GM12878 (cell line): ENCODE measurements at regions of chrX and their contacts with region 1.

Region 1: DNA sequence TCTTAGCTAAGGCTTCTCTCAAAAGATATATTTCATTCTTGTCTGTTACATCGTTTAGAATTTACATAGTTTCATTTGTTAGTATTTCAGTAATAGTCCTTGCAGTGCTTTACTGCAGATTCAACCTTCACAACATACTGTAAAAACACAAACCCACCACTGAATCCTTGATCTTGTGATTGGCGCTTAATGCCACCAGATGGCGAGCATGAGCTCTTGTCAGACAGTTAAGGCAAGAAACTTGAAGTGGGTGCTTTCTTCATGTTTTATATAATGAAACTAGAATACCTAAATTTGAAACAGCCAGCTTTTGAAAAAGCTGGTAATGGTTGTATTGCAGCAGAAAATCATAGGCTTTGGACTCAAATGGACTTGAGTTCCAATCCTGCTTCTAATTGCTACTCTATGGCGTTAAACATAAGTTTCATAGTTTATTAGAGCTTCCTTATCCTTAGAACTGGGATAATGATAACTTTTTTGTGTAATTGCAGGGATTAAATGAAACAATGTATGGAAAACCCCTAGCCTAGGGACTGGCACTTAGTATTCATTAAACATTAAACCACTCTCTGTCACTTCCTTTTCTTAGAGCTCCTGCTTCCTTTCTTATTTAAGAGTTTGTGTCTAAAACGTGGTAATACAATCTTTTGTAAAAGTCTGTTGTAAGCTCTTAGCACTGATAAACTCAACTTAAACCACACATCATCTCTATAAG is 95.1 kb downstream of the USP9X start:
- DNase-seq: peak; percentile 59
- ATAC-seq: peak; percentile 83
- H3K4me3 ChIP-seq: 0 out of 2 replicates have a peak overlapping the region, but pooled peaks have one; percentile 8
- H3K27ac ChIP-seq: peak overlapping the region; percentile 45
- H3K4me1 ChIP-seq: peaks cover 18% of the 10 kb centered on the region
- H3K27me3 ChIP-seq: no peaks in the 10 kb centered on the region
- CTCF ChIP-seq: peak; percentile 75 to 87 (median 81)
- EP300 ChIP-seq: 0 out of 4 replicates have a peak, but pooled peaks of 1 of the 2 experiments have one; percentile 16
- POLR2A ChIP-seq: no peak
- RAD21 ChIP-seq: peak; percentile 84

Region 2: GRCh38 chrX:40539214-40540142 is 640.9 kb before region 1 on chrX:
- CTCF ChIA-PET with region 1: interaction called, 7 read pairs
- POLR2A ChIA-PET with region 1: no interaction called
- RAD21 ChIA-PET with region 1: interaction called, 13 read pairs
- SMC1A ChIA-PET with region 1: interaction called, 6 read pairs
- in situ Hi-C with region 1: no loop called
- intact Hi-C with region 1: no loop called
- DNase-seq: peak; percentile 56
- ATAC-seq: peak; percentile 90
- H3K4me3 ChIP-seq: no peak overlapping the region
- H3K27ac ChIP-seq: peak overlapping the region; percentile 59
- H3K4me1 ChIP-seq: peaks cover 11% of the 10 kb centered on the region
- H3K27me3 ChIP-seq: peaks cover 0 to 2% of the 10 kb centered on the region in 2 experiments; a peak in 2 of 4 replicates
- CTCF ChIP-seq: peak; percentile 30 to 51 (median 48); a peak in 5 of 6 replicates
- EP300 ChIP-seq: no peak
- POLR2A ChIP-seq: no peak
- RAD21 ChIP-seq: 0 out of 2 replicates have a peak, but pooled peaks have one; percentile 26

Region 3: DNA sequence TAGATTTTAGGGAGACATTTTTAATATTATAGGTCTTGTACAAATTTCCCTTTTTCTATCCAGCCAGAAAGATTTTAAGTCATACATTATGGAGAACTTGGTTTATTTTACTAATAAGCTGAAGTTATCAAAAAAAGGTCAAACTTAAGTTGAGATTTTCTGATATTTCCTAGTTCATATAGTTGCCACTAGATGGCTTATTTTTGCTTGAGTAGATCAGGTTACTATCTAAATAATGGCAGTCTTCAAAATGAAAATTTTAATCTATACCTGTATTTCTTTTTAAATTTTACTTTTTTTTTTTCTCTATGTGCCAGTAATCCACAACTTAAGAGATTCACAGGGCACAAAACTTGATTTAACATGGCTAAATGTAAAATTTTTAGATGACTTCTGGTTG is 42.8 kb before region 1 on chrX:
- CTCF ChIA-PET with region 1: interaction called, 18 read pairs
- POLR2A ChIA-PET with region 1: interaction called, 4 read pairs
- RAD21 ChIA-PET with region 1: interaction called, 4 read pairs
- SMC1A ChIA-PET with region 1: interaction called, 13 read pairs
- in situ Hi-C with region 1: no loop called
- intact Hi-C with region 1: no loop called
- DNase-seq: no peak
- ATAC-seq: peak; percentile 49
- H3K4me3 ChIP-seq: no peak overlapping the region
- H3K27ac ChIP-seq: no peak overlapping the region
- H3K4me1 ChIP-seq: no peaks in the 10 kb centered on the region
- H3K27me3 ChIP-seq: no peaks in the 10 kb centered on the region
- CTCF ChIP-seq: peak in 2 of 3 experiments; percentile 30 to 42; a peak in 4 of 6 replicates
- EP300 ChIP-seq: no peak
- POLR2A ChIP-seq: no peak
- RAD21 ChIP-seq: peak; percentile 32; the same call in 1 of the 2 replicates

Region 4: DNA sequence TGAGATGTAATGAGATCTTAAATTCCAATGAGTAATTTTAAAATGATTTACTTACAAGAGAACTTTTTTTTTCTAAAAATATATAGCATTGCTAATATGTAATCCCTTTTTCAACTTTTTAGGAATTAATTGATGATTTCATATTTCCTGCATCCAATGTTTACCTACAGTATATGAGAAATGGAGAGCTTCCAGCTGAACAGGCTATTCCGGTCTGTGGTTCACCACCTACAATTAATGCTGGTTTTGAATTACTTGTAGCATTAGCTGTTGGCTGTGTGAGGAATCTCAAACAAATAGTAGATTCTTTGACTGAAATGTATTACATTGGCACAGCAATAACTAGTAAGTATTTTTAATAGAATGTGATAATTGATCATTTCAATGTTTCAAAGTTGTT is 18.1 kb after region 1 on chrX:
- CTCF ChIA-PET with region 1: interaction called, 33 read pairs
- POLR2A ChIA-PET with region 1: no interaction called
- RAD21 ChIA-PET with region 1: interaction called, 4 read pairs
- SMC1A ChIA-PET with region 1: interaction called, 20 read pairs
- in situ Hi-C with region 1: no loop called
- intact Hi-C with region 1: no loop called
- DNase-seq: no peak
- ATAC-seq: no peak
- H3K4me3 ChIP-seq: no peak overlapping the region
- H3K27ac ChIP-seq: no peak overlapping the region
- H3K4me1 ChIP-seq: no peaks in the 10 kb centered on the region
- H3K27me3 ChIP-seq: no peaks in the 10 kb centered on the region
- CTCF ChIP-seq: no peak
- EP300 ChIP-seq: no peak
- POLR2A ChIP-seq: no peak
- RAD21 ChIP-seq: no peak

Region 5: DNA sequence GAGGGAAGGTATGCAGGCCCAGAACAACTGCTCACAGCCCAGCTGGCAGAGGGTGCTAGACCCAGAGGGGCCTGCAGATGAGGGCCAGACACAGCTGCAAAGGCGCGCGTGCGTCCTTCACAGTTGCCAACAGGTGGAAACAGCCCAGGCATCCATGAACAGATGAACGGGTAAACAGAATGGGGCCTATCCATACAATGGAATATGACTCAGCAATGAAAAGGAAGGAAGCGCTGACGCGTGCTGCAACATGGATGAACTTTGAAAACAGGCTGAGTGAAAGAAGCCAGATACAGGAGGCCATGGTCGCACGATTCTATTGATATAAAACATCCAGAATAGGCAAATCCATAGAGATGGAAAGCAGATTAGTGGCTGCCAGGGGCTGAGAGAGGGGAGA is 70.5 kb after region 1 on chrX:
- CTCF ChIA-PET with region 1: interaction called, 227 read pairs
- POLR2A ChIA-PET with region 1: interaction called, 8 read pairs
- RAD21 ChIA-PET with region 1: interaction called, 116 read pairs
- SMC1A ChIA-PET with region 1: interaction called, 163 read pairs
- in situ Hi-C with region 1: loop called (anchors 5 kb)
- intact Hi-C with region 1: loop called (anchors 1 kb)
- DNase-seq: no peak
- ATAC-seq: no peak
- H3K4me3 ChIP-seq: no peak overlapping the region
- H3K27ac ChIP-seq: no peak overlapping the region
- H3K4me1 ChIP-seq: no peaks in the 10 kb centered on the region
- H3K27me3 ChIP-seq: no peaks in the 10 kb centered on the region
- CTCF ChIP-seq: no peak
- EP300 ChIP-seq: no peak
- POLR2A ChIP-seq: no peak
- RAD21 ChIP-seq: no peak

Region 6: DNA sequence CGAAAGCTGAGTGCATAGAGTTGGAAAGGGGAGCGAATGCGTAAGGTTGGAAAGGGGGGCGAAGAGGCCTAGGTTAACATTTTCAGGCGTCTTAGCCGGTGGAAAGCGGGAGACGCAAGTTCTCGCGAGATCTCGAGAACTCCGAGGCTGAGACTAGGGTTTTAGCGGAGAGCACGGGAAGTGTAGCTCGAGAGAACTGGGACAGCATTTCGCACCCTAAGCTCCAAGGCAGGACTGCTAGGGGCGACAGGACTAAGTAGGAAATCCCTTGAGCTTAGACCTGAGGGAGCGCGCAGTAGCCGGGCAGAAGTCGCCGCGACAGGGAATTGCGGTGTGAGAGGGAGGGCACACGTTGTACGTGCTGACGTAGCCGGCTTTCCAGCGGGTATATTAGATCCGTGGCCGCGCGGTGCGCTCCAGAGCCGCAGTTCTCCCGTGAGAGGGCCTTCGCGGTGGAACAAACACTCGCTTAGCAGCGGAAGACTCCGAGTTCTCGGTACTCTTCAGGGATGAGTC is 153.5 kb after region 1 on chrX and contains the start of gene DDX3X:
- CTCF ChIA-PET with region 1: no interaction called
- POLR2A ChIA-PET with region 1: no interaction called
- RAD21 ChIA-PET with region 1: interaction called, 7 read pairs
- SMC1A ChIA-PET with region 1: interaction called, 7 read pairs
- in situ Hi-C with region 1: no loop called
- intact Hi-C with region 1: loop called (anchors 5 kb)
- DNase-seq: peak; percentile 91
- ATAC-seq: peak; percentile 72
- H3K4me3 ChIP-seq: peak within 1 kb of the TSS; percentile 91
- H3K27ac ChIP-seq: peak within 1 kb of the TSS; percentile 99
- H3K4me1 ChIP-seq: peaks cover 10% of the 10 kb centered on the region
- H3K27me3 ChIP-seq: no peaks in the 10 kb centered on the region; a peak in 1 of 4 replicates
- CTCF ChIP-seq: peak; percentile 19 to 37 (median 29); a peak in 5 of 6 replicates
- EP300 ChIP-seq: peak in 1 of 2 experiments; percentile 4; a peak in 1 of 4 replicates
- POLR2A ChIP-seq: no peak; the same call in none of the 2 replicates
- RAD21 ChIP-seq: 0 out of 2 replicates have a peak, but pooled peaks have one; percentile 3
- polyA plus RNA-seq, gene DDX3X: 52.0 to 56.7 TPM

Region 7: GRCh38 chrX:41391606-41392005 is 211.3 kb after region 1 on chrX:
- CTCF ChIA-PET with region 1: no interaction called
- POLR2A ChIA-PET with region 1: no interaction called
- RAD21 ChIA-PET with region 1: no interaction called
- SMC1A ChIA-PET with region 1: no interaction called
- in situ Hi-C with region 1: no loop called
- intact Hi-C with region 1: no loop called
- DNase-seq: no peak
- ATAC-seq: no peak
- H3K4me3 ChIP-seq: no peak overlapping the region
- H3K27ac ChIP-seq: no peak overlapping the region
- H3K4me1 ChIP-seq: no peaks in the 10 kb centered on the region
- H3K27me3 ChIP-seq: 0 out of 4 replicates have a peak, but pooled peaks cover 0 to 2% of the 10 kb centered on the region in 2 experiments
- CTCF ChIP-seq: no peak
- EP300 ChIP-seq: no peak
- POLR2A ChIP-seq: no peak
- RAD21 ChIP-seq: no peak